Vagina (tissue), 2 donors: ENCODE measurements at regions of chr19 and their contacts with region 1.

Region 1: GRCh38 chr19:35545001-35545911 is at the start of gene TMEM147:
- DNase-seq: no peak
- H3K4me3 ChIP-seq: peak within 1 kb of the TSS; percentile 72 to 94
- H3K27ac ChIP-seq: peak within 1 kb of the TSS; percentile 70
- H3K4me1 ChIP-seq: peaks cover 25% of the 10 kb centered on the region
- H3K27me3 ChIP-seq: no peaks in the 10 kb centered on the region
- CTCF ChIP-seq: no peak
- POLR2A ChIP-seq: peak in 1 of 2 donors; percentile 32
- total RNA-seq, gene TMEM147: 104 TPM

Region 2: DNA sequence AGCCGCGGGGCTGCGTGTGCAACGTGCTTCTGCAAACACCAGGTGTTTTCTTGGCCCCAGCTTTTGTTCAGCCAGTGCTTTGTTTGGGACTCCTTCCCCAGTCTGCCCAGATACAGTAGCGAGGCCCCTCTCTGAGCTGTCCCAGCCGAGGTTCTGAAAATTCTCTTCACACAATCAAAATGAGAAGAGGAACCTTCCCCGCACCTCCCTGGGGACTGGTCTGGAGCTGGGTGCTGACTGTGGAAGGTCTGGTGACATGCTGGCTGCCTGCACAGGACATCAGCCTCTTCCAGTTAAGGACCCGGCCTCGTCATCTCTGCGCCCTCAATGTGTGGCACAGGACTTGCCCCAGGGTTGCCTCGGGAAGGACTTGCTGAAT is 14.0 kb after region 1 on chr19:
- intact Hi-C with region 1: no loop called
- DNase-seq: no peak
- H3K4me3 ChIP-seq: no peak overlapping the region
- H3K27ac ChIP-seq: no peak overlapping the region
- H3K4me1 ChIP-seq: peaks cover 13% of the 10 kb centered on the region
- H3K27me3 ChIP-seq: no peaks in the 10 kb centered on the region
- CTCF ChIP-seq: no peak
- POLR2A ChIP-seq: no peak

Region 3: DNA sequence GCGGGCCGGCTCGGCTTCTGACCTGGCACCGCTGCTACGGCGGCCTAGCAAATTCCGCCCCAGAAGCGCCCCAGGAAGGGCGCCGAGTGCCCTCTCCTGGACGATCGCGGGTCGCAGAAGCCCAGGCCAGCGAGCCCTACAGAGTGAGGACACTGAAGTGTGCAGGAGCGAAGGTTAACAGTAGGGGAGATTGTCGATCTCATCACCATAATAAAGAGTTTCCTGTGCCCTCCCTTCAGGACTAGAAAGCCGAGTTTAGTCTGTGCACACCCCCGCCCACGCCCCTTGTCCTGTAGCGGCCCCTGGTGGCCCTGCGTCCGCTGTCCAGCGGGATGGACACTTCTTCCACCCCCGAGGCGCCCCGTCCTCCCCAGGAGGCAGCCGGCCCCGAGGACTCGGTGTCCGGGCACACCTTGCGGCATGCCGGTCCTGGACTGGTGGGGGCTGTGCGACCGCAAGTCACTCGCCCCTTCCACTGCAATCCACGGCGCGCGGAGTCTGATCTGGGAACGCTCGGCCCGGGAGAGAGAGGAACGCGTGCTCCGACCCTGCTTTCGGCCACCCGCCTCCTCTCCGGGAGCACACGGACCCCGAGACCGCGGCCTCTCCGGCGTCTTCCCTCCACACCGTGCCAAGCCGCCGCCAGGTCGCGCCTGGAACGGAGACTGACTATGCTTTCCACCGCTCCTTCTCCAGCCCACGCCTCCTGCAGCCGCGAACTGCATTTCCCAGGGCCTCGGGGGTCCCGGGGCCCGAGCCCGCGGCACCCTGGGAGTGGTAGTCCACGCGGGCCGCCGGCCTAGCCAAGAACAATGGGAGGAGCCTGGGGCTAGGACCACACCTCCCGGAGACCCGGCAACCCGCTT is 171.8 kb after region 1 on chr19:
- intact Hi-C with region 1: loop called (anchors 5 kb)
- DNase-seq: peak in 1 of 2 donors; percentile 95
- H3K4me3 ChIP-seq: peak overlapping the region; percentile 67 to 86
- H3K27ac ChIP-seq: peak overlapping the region; percentile 85
- H3K4me1 ChIP-seq: peaks cover 30% of the 10 kb centered on the region
- H3K27me3 ChIP-seq: no peaks in the 10 kb centered on the region
- CTCF ChIP-seq: peak; percentile 59 to 94 (median 93)
- POLR2A ChIP-seq: peak in 1 of 2 donors; percentile 27